Activated CD4-positive, alpha-beta T cell treated with anti-CD3 and anti-CD28 coated beads, Interleukin-2, amount 10 ng/mL, durations not matched to agents 24 days and 14 days (primary cell): ENCODE measurements at regions of chr16 and their contacts with region 1.

Region 1: DNA sequence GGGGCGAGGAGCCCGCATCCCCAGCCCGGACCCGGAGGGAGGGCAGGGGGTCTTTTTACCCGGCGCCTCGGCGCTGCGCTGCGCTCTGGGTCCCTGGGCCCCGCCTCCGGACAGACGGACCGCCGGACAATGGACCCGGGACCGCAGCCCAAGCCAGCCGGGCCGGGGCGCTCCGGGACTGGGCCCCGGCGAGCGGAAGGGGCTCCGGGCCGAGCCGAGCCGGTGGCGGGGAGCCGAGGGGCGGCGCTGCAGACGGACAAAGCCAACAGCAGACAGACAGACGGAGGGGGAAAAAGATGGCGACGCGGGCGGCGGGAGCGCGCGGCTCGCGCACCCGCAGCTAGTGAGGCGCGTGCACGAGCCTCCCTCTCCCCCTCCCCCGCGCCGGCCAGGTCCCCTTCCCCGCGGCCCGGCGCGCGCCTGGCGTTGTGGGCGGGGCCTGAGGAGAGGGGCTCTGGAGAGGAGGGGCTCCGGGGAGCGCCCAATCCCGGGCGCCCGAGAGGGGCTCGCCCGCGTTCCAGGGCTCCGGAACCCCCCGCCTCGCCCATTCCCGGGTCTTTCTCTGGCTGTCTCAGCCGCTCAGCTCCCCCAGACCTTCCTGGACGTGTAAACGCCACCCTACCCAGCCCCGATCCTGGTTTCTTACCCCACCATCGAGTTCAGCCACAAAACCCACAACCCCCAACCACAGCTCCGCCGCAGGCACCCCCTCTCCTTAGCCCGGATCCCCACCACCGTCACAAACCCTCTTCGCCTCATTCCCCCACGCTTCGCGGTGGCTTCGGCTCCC is at the start of gene ZNF821:
- DNase-seq: peak; percentile 92
- H3K4me3 Mint-ChIP-seq: peak within 1 kb of the TSS; percentile 93
- H3K27ac Mint-ChIP-seq: peak within 1 kb of the TSS; percentile 90
- H3K4me1 Mint-ChIP-seq: peaks cover 39% of the 10 kb centered on the region
- H3K27me3 Mint-ChIP-seq: peaks cover 13% of the 10 kb centered on the region
- total RNA-seq, gene ZNF821: 5.9 and 6.5 TPM in 2 replicates

Region 2: GRCh38 chr16:71564155-71564967 is 319.7 kb before region 1 on chr16:
- intact Hi-C with region 1: loop called (anchors 10 kb)
- DNase-seq: no peak
- H3K4me3 Mint-ChIP-seq: peak overlapping the region; percentile 87
- H3K27ac Mint-ChIP-seq: peak overlapping the region; percentile 91
- H3K4me1 Mint-ChIP-seq: peaks cover 15% of the 10 kb centered on the region
- H3K27me3 Mint-ChIP-seq: peaks cover 7% of the 10 kb centered on the region

Region 3: GRCh38 chr16:71723537-71724319 is 160.3 kb before region 1 on chr16:
- intact Hi-C with region 1: loop called (anchors 5 kb)
- DNase-seq: peak; percentile 94
- H3K4me3 Mint-ChIP-seq: peak overlapping the region; percentile 79
- H3K27ac Mint-ChIP-seq: peak overlapping the region; percentile 53
- H3K4me1 Mint-ChIP-seq: peaks cover 13% of the 10 kb centered on the region
- H3K27me3 Mint-ChIP-seq: peaks cover 13% of the 10 kb centered on the region

Region 4: GRCh38 chr16:71845639-71846430 is 38.2 kb before region 1 on chr16 and contains the start of gene ATXN1L:
- intact Hi-C with region 1: loop called (anchors 1 kb)
- DNase-seq: peak; percentile 99
- H3K4me3 Mint-ChIP-seq: peak within 1 kb of the TSS; percentile 96
- H3K27ac Mint-ChIP-seq: peak within 1 kb of the TSS; percentile 97
- H3K4me1 Mint-ChIP-seq: peaks cover 45% of the 10 kb centered on the region
- H3K27me3 Mint-ChIP-seq: no peaks in the 10 kb centered on the region
- total RNA-seq, gene ATXN1L: 16.7 and 19.3 TPM in 2 replicates

Region 5: DNA sequence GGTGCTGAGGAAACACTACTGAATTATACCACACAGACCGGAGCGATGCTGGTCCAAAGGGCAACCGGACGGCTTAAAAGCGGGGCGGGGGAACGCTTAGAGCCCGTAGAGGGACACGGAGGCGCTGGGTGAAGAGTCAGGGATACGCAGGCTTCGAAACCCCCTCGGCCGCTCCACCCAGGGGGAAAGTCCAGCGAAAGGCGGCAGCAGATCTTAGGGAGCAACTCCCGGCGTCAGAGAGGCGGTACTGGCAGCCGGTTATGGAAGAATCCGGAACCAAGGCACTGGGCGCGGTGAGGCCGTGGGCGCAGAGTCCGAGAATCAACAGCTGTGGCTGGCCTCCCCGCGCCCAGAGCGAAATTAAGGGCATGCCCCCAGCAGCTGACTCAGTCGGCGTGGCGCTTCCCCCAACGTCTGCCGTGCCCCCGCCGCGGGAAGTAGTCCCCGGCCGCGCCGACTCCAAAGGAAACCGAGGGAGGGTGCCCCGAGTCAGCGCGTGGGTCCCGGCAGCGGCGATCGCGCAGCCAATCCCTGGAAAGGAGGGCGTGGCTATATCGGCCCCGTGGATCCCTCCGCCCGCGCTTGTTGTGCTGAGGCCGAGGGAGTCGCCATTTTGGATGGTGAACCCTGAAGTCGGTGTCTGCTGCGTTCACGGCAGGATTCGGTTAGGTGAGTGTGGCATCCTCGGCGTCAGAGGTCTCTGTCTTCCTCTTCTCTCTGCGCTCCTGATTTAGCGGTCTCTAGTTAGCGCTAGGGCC is 11.1 kb after region 1 on chr16 and contains the start of gene IST1:
- intact Hi-C with region 1: loop called (anchors 1 kb)
- DNase-seq: peak; percentile 99
- H3K4me3 Mint-ChIP-seq: peak within 1 kb of the TSS; percentile 95
- H3K27ac Mint-ChIP-seq: peak within 1 kb of the TSS; percentile 95
- H3K4me1 Mint-ChIP-seq: peaks cover 11% of the 10 kb centered on the region
- H3K27me3 Mint-ChIP-seq: peaks cover 1% of the 10 kb centered on the region
- total RNA-seq, gene IST1: 149 and 156 TPM in 2 replicates

Region 6: GRCh38 chr16:71919035-71919434 is 35.0 kb after region 1 on chr16:
- intact Hi-C with region 1: no loop called
- DNase-seq: no peak
- H3K4me3 Mint-ChIP-seq: no peak overlapping the region
- H3K27ac Mint-ChIP-seq: no peak overlapping the region
- H3K4me1 Mint-ChIP-seq: peaks cover 29% of the 10 kb centered on the region
- H3K27me3 Mint-ChIP-seq: no peaks in the 10 kb centered on the region

Region 7: DNA sequence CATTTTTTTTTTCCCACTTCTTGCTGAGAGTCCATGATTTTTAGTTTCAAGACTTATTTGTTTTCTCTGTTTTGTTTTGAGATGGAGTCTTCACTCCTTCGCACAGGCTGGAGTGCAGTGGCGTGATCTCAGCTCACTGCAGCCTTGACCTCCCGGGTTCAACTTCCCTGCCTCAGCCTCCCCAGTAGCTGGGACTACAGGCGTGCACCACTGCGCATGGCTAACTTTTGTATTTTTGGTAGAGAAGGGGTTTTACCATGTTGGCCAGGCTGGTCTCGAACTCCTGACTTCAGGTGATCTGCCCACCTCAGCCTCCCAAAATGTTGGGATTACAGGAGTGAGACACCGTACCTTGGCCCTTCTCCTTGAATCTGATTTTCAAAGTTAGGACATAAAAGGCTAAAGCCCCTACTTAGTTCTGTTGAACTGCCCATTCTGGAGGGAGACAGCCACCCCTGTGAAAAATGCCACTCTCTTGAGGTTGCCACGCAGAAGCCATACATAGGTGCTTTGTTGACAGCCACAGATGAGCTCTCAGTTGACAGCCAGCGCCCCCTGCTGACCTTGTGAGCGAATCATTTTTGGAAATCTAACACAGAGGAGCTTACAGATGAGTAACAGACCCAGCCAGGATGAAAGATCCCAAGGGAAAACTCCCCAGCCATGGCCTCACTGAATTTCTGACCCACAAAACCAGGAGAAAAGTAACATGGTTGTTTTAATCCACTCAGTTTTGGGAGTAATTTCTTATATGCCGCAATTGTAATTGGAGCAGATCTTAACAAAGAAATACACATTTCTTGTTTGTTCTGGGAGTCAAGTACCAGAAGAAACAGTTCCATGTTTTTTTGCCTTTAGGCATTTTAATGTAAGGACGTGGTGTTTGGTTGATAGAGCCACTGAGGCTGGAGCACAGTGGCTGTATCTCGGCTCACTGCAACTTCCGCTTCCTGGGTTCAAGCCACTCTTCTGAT is 77.3 kb after region 1 on chr16:
- intact Hi-C with region 1: loop called (anchors 1 kb)
- DNase-seq: peak; percentile 94
- H3K4me3 Mint-ChIP-seq: no peak overlapping the region
- H3K27ac Mint-ChIP-seq: no peak overlapping the region
- H3K4me1 Mint-ChIP-seq: peaks cover 5% of the 10 kb centered on the region
- H3K27me3 Mint-ChIP-seq: peaks cover 8% of the 10 kb centered on the region

Region 8: GRCh38 chr16:72008424-72009216 is 124.6 kb after region 1 on chr16 and contains the start of gene DHODH:
- intact Hi-C with region 1: loop called (anchors 2 kb)
- DNase-seq: peak; percentile 99
- H3K4me3 Mint-ChIP-seq: peak within 1 kb of the TSS; percentile 91
- H3K27ac Mint-ChIP-seq: peak within 1 kb of the TSS; percentile 93
- H3K4me1 Mint-ChIP-seq: peaks cover 22% of the 10 kb centered on the region
- H3K27me3 Mint-ChIP-seq: peaks cover 5% of the 10 kb centered on the region
- total RNA-seq, gene DHODH: 31.8 and 33.7 TPM in 2 replicates

Region 9: DNA sequence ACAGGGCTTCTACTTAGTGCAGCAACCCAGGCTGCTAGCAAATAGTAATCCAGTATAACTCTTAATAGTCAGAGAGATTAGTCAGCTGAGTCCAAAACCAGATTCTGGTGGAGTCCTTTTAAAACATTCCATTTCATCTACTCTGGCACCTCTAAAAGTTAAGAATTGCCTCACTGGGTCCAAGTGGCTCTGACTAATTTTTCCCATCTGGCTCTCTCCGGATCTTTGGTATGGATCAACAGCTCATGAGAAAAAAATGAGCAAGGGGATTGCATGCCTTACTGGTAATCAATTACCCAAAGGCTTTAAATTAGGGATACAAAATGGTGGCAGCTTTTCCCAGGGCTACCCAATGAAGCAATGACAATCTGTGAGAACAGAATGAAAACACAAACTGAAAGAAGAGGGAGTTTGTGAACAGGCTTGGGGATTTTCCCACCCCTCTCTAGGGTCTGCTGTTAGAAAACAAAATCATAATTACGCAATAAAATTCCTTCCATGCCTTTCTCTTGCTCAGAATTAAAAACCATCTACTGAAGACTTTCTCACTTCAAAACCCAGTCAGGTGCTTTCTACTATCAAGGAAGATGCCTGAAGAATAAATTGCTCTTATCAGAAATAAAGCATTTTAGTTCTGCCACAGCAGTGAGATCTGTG is 372.5 kb after region 1 on chr16:
- intact Hi-C with region 1: no loop called
- DNase-seq: no peak
- H3K4me3 Mint-ChIP-seq: no peak overlapping the region
- H3K27ac Mint-ChIP-seq: no peak overlapping the region
- H3K4me1 Mint-ChIP-seq: no peaks in the 10 kb centered on the region
- H3K27me3 Mint-ChIP-seq: no peaks in the 10 kb centered on the region